T-cell (primary cell): ENCODE measurements at regions of chr12 and their contacts with region 1.

Region 1: DNA sequence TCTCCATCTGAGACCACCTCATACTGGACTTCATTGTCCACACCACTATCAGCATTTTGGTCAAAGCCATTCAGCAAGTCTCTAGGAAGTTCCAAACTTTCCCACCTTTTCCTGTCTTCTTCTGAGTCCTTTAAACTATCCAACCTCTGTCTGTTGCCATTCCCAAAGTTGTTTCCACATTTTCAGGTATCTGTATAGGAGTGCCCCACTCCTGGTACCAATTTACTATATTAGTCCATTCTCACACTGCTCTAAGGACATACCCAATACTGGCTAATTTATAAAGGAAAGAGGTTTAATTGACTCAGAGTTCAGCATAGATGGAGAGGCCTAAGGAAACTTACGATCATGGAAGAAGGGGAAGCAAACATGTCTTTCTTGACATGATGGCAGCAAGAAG is 292.2 kb upstream of the ATXN7L3B start:
- DNase-seq: no peak
- ATAC-seq: no peak
- H3K4me3 ChIP-seq: no peak overlapping the region
- H3K4me3 Mint-ChIP-seq: no peak overlapping the region
- H3K27ac ChIP-seq: no peak overlapping the region
- H3K27ac Mint-ChIP-seq: no peak overlapping the region
- H3K4me1 ChIP-seq: no peaks in the 10 kb centered on the region
- H3K4me1 Mint-ChIP-seq: no peaks in the 10 kb centered on the region
- H3K27me3 ChIP-seq: no peaks in the 10 kb centered on the region
- H3K27me3 Mint-ChIP-seq: no peaks in the 10 kb centered on the region

Region 2: GRCh38 chr12:74193191-74193590 is 52.3 kb before region 1 on chr12:
- CTCF ChIA-PET with region 1: no interaction called
- POLR2A ChIA-PET with region 1: no interaction called
- DNase-seq: no peak
- ATAC-seq: no peak
- H3K4me3 ChIP-seq: no peak overlapping the region
- H3K4me3 Mint-ChIP-seq: no peak overlapping the region
- H3K27ac ChIP-seq: no peak overlapping the region
- H3K27ac Mint-ChIP-seq: no peak overlapping the region
- H3K4me1 ChIP-seq: no peaks in the 10 kb centered on the region
- H3K4me1 Mint-ChIP-seq: no peaks in the 10 kb centered on the region
- H3K27me3 ChIP-seq: no peaks in the 10 kb centered on the region
- H3K27me3 Mint-ChIP-seq: no peaks in the 10 kb centered on the region

Region 3: DNA sequence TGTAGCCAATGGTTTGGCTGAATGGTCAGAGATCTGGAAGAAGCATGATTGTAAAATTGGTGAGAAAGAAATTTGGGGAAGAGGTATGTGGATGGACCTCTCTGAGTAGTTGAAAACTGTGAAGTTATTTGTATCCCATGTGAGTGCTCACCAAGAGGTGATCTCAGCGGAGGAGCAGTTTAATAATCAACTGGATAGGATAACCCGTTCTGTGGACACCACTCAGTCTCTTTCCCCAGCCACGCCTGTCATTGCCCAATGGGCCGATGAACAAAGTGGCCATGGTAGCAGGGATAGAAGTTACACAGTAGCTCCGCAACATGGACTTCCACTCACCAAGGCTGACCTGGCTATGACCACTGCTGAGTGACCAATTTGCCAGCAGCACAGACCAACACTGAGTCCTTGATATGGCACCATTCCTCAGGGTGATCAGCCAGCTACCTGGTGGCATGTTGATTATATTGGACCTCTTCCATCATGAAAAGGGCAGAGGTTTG is 34.7 kb after region 1 on chr12:
- CTCF ChIA-PET with region 1: no interaction called
- POLR2A ChIA-PET with region 1: interaction called in 1 of 2 experiments, 15 read pairs
- DNase-seq: no peak
- ATAC-seq: no peak
- H3K4me3 ChIP-seq: no peak overlapping the region
- H3K4me3 Mint-ChIP-seq: no peak overlapping the region
- H3K27ac ChIP-seq: no peak overlapping the region
- H3K27ac Mint-ChIP-seq: no peak overlapping the region
- H3K4me1 ChIP-seq: no peaks in the 10 kb centered on the region
- H3K4me1 Mint-ChIP-seq: no peaks in the 10 kb centered on the region
- H3K27me3 ChIP-seq: no peaks in the 10 kb centered on the region
- H3K27me3 Mint-ChIP-seq: no peaks in the 10 kb centered on the region